Right cardiac atrium (tissue), 5 donors: ENCODE measurements at regions of chr9 and their contacts with region 1.

Region 1: GRCh38 chr9:4315582-4316215 is 15.8 kb upstream of the GLIS3 start:
- DNase-seq: peak; percentile 74 to 91 (median 90)
- ATAC-seq: peak; percentile 90 to 91
- H3K4me3 ChIP-seq: no peak overlapping the region
- H3K27ac ChIP-seq: no peak overlapping the region
- H3K4me1 ChIP-seq: peaks cover 2% of the 10 kb centered on the region
- H3K27me3 ChIP-seq: no peaks in the 10 kb centered on the region

Region 2: DNA sequence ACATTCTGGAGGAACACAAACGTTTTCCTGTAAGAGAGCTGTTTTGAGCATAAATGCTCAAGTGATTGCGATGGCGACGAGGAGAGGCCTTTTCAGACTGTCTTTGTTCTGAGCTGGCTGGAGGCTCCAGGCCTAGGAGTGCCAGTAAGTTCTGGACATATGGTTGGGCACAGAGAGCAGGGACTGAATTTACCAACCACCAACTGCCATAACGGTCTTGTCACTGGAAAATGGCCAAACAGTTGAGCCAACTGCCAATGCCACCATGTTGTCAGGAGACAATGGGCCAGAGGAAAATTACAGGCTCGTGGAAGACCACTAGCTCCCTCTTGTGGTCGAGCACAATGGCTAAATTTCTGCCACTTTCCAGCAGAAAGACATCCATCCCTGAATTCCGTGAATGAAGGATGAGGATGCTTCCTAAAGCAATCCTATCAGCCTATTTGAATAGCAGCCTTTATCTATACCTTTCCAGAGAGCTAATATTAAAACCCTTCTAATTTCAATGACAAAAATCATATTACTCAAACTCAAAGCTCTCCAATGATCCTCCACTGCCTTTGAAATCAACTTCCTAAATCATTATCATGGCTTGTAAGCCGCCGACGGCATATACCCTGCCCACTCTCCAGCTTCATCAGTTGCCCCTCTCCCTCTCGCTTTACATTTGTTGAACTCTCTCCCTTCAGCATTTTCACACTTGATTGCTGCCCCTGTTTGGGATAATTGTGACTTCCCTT is 51.1 kb after region 1 on chr9:
- intact Hi-C with region 1: loop called in 3 of 4 experiments (anchors 5 to 10 kb)
- DNase-seq: no peak
- ATAC-seq: no peak
- H3K4me3 ChIP-seq: no peak overlapping the region
- H3K27ac ChIP-seq: no peak overlapping the region
- H3K4me1 ChIP-seq: no peaks in the 10 kb centered on the region
- H3K27me3 ChIP-seq: no peaks in the 10 kb centered on the region

Region 3: DNA sequence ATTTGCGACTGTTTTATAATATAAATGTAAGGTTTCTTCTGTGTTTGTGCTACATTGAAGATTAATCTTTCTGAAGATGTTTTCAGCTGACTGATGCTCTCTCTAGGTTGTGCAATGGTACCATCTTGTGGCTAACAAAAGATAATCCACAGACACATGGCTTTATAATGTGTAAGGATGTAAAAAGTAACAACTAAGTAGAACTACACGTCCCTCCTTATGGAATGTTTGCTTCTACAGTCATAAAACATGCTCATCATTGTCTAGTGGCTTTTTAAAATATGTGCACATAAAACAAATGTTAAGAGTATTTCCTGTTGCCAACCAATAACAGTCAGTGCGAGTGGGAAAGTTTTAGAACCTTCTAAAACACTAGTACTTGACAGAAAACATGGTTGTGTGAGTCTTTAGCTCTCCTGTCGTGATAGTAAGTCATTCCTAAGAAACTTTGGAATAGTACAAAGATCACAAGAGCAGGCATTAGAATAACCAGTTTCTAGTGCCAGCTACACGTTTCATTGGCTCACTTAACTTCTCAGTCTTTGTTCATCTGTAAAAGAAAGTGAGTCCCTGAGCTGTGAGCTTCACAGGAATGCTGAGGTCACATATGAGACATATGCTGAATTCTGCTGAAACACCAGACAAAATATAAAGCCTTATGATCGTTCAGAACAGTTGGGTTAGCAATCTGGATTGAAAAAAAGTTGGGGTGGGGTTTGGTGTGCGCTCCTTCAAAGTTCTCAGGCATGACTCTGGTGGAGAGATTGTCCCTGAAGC is 59.9 kb after region 1 on chr9:
- intact Hi-C with region 1: loop called in 2 of 4 experiments (anchors 5 to 10 kb)
- DNase-seq: no peak
- ATAC-seq: peak in 1 of 2 donors; percentile 54
- H3K4me3 ChIP-seq: no peak overlapping the region
- H3K27ac ChIP-seq: no peak overlapping the region
- H3K4me1 ChIP-seq: no peaks in the 10 kb centered on the region
- H3K27me3 ChIP-seq: no peaks in the 10 kb centered on the region